Astrocyte of the cerebellum (primary cell): ENCODE measurements at regions of chr6 and their contacts with region 1.

Region 1: GRCh38 chr6:150767571-150768018 is 97.9 kb upstream of the MTHFD1L start:
- DNase-seq: peak; percentile 77
- H3K4me3 ChIP-seq: no peak overlapping the region
- CTCF ChIP-seq: no peak

Region 2: DNA sequence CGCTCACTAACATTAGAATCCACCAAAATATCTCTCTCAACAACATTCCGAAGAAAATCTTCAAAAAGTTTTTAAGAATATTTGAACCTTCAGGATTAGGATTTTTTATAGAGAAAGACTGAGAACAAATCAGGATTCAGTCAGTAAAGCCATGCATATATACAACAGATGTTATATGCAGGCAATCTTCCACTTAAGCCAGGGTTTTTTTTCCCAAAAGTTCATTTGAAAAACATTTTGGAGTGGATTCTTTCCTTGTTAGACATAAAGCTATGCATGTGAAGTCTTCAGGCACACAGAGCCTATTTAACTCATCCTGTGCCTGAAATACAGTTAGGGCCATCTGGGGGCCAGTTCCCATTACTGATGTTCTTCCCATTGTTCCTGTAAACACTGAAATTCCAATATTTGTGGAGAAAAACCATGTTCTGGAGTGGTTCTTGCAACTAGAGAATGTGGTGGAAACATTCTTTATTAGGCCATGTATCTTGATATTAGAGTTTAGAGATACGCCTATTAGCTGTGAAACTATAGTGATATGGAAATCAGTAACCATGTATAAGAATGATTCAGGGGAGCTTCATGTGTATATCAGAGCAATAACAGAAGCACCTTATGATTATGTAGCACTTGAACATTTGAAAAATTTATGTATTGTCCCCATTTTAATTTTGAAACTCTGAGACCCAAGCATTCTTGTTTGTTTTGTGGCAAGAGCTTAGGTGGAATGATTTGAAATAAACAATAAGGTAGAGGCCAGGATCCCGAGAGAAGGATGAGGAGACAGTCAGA is 106.2 kb before region 1 on chr6:
- in situ Hi-C with region 1: loop called (anchors 5 kb)
- DNase-seq: no peak
- H3K4me3 ChIP-seq: no peak overlapping the region
- CTCF ChIP-seq: no peak

Region 3: GRCh38 chr6:150672800-150673199 is 94.8 kb before region 1 on chr6:
- in situ Hi-C with region 1: no loop called
- DNase-seq: no peak
- H3K4me3 ChIP-seq: no peak overlapping the region
- CTCF ChIP-seq: no peak

Region 4: GRCh38 chr6:150848400-150848799 is 80.8 kb after region 1 on chr6:
- in situ Hi-C with region 1: no loop called
- DNase-seq: no peak
- H3K4me3 ChIP-seq: no peak overlapping the region
- CTCF ChIP-seq: no peak